Naive thymus-derived CD4-positive, alpha-beta T cell (primary cell): ENCODE measurements at regions of chr2 and their contacts with region 1.

Region 1: GRCh38 chr2:239298116-239298804 is 102.6 kb downstream of the HDAC4 start:
- DNase-seq: peak in 8 of 9 donors; percentile 67 to 88 (median 84)
- ATAC-seq: peak; percentile 85
- H3K4me3 ChIP-seq: peak overlapping the region; percentile 66
- H3K4me3 Mint-ChIP-seq: peak overlapping the region; percentile 79 to 94 (median 90)
- H3K27ac ChIP-seq: peak overlapping the region; percentile 77
- H3K27ac Mint-ChIP-seq: peak overlapping the region; percentile 89 to 97 (median 93)
- H3K4me1 ChIP-seq: peaks cover 34 to 64% of the 10 kb centered on the region in 2 donors
- H3K4me1 Mint-ChIP-seq: peaks cover 30 to 95% (median 77%) of the 10 kb centered on the region in 7 donors
- H3K27me3 ChIP-seq: no peaks in the 10 kb centered on the region
- H3K27me3 Mint-ChIP-seq: no peaks in the 10 kb centered on the region

Region 2: GRCh38 chr2:239035361-239036078 is 262.7 kb before region 1 on chr2:
- CTCF ChIA-PET with region 1: no interaction called
- POLR2A ChIA-PET with region 1: no interaction called
- intact Hi-C with region 1: loop called in 1 of 2 experiments (anchors 1 kb)
- DNase-seq: peak; percentile 30 to 79 (median 62)
- ATAC-seq: peak; percentile 85
- H3K4me3 ChIP-seq: no peak overlapping the region
- H3K4me3 Mint-ChIP-seq: no peak overlapping the region
- H3K27ac ChIP-seq: no peak overlapping the region
- H3K27ac Mint-ChIP-seq: no peak overlapping the region
- H3K4me1 ChIP-seq: no peaks in the 10 kb centered on the region
- H3K4me1 Mint-ChIP-seq: peaks cover 0 to 2% (median 0%) of the 10 kb centered on the region in 7 donors
- H3K27me3 ChIP-seq: no peaks in the 10 kb centered on the region
- H3K27me3 Mint-ChIP-seq: peaks cover 7 to 27% (median 18%) of the 10 kb centered on the region in 5 donors

Region 3: DNA sequence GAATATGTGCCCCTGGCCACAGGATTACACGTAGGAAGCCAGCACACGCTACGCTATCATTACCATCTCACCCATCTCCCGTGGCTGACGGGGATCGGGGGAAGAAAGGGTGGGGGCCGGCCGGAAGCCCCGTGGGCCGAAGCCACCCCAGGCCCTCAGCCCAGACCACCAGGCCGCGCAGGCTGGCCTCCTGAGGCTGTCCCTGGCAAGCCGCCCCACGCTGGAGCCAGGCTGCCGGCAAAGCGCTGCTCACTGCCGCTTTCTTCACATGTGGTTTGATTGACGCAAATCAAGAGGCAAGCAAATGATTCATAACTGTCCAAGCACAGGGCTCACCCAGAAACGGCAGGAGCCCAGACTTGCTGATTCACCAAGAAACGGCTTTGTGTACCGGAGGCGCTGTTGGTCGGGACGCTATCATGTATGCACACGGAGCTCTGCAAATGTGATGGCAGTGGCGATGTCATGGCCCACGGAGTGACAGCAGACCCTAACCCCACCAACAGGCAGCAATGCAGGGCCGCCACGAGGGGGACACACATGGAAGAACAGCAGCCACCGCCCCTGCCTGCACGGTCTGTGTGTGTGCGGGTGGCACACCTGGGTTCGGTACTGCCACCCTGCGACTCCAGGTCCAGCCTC is 23.1 kb before region 1 on chr2:
- CTCF ChIA-PET with region 1: interaction called, 100 read pairs
- POLR2A ChIA-PET with region 1: interaction called, 362 read pairs
- intact Hi-C with region 1: loop called (anchors 1 kb)
- DNase-seq: peak; percentile 55 to 88 (median 78)
- ATAC-seq: peak; percentile 94
- H3K4me3 ChIP-seq: peak overlapping the region; percentile 35
- H3K4me3 Mint-ChIP-seq: peak overlapping the region; percentile 72 to 88 (median 80)
- H3K27ac ChIP-seq: peak overlapping the region; percentile 19
- H3K27ac Mint-ChIP-seq: peak overlapping the region; percentile 67 to 97 (median 87)
- H3K4me1 ChIP-seq: peaks cover 17 to 32% of the 10 kb centered on the region in 2 donors
- H3K4me1 Mint-ChIP-seq: peaks cover 53 to 84% (median 78%) of the 10 kb centered on the region in 7 donors
- H3K27me3 ChIP-seq: no peaks in the 10 kb centered on the region
- H3K27me3 Mint-ChIP-seq: peaks cover 0 to 4% (median 0%) of the 10 kb centered on the region in 5 donors

Region 4: GRCh38 chr2:239326831-239327535 is 28.7 kb after region 1 on chr2:
- CTCF ChIA-PET with region 1: no interaction called
- POLR2A ChIA-PET with region 1: interaction called, 80 read pairs
- intact Hi-C with region 1: loop called in 1 of 2 experiments (anchors 1 kb)
- DNase-seq: peak in 8 of 9 donors; percentile 54 to 81 (median 72)
- ATAC-seq: peak; percentile 83
- H3K4me3 ChIP-seq: no peak overlapping the region
- H3K4me3 Mint-ChIP-seq: peak overlapping the region; percentile 55 to 79 (median 71)
- H3K27ac ChIP-seq: peak overlapping the region; percentile 68
- H3K27ac Mint-ChIP-seq: peak overlapping the region; percentile 89 to 100 (median 95)
- H3K4me1 ChIP-seq: peaks cover 20 to 65% of the 10 kb centered on the region in 2 donors
- H3K4me1 Mint-ChIP-seq: peaks cover 54 to 99% (median 89%) of the 10 kb centered on the region in 7 donors
- H3K27me3 ChIP-seq: no peaks in the 10 kb centered on the region
- H3K27me3 Mint-ChIP-seq: no peaks in the 10 kb centered on the region

Region 5: DNA sequence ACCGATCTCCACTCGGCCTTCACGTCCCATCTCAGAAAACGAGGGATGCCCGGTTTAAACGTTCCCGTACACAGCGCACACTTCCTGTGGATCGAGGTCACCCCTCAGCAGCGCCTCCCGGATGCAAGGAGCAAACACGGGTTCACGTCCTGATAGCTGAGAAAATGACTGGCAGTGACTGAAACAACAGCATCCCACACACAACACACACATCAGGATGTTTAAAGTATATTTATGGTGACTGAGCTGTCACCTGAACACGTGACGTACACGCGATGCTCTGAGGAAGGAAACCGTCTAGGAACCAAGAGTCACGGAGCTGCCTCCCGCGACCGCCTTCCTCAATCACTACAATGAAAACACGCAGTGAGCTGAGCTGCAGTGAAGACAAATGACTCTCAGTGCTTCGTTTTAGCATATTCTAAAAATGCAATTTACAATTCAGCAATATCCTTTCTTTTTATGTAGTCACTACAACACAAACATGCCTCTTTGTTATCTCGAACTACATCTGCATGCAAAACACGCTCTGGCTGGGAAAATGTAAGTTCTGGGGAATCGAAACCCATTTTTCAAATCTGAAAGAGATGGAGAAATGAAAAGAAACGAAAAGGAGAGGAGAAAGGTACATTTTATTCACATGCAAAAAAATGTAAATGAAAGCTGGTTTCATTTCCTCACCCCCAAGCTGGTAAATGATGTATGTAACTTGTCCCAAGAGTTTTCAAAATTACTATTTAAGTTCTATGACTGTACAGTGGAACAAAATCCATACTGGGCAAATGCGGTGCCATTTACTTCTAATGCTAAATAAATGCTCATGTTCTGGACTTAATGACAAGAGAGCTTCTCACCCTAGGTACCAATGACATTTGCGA is 82.8 kb after region 1 on chr2:
- CTCF ChIA-PET with region 1: interaction called, 5 read pairs
- POLR2A ChIA-PET with region 1: interaction called, 11 read pairs
- intact Hi-C with region 1: loop called in 1 of 2 experiments (anchors 1 kb)
- DNase-seq: peak; percentile 34 to 87 (median 81)
- ATAC-seq: peak; percentile 91
- H3K4me3 ChIP-seq: peak overlapping the region; percentile 20
- H3K4me3 Mint-ChIP-seq: peak overlapping the region; percentile 69 to 93 (median 88)
- H3K27ac ChIP-seq: peak overlapping the region; percentile 67
- H3K27ac Mint-ChIP-seq: peak overlapping the region; percentile 90 to 99 (median 96)
- H3K4me1 ChIP-seq: peaks cover 0 to 15% of the 10 kb centered on the region in 2 donors
- H3K4me1 Mint-ChIP-seq: peaks cover 21 to 47% (median 35%) of the 10 kb centered on the region in 7 donors
- H3K27me3 ChIP-seq: no peaks in the 10 kb centered on the region
- H3K27me3 Mint-ChIP-seq: no peaks in the 10 kb centered on the region